ENCODE measurements at regions of chr19 and their contacts with region 1.

Region 1: DNA sequence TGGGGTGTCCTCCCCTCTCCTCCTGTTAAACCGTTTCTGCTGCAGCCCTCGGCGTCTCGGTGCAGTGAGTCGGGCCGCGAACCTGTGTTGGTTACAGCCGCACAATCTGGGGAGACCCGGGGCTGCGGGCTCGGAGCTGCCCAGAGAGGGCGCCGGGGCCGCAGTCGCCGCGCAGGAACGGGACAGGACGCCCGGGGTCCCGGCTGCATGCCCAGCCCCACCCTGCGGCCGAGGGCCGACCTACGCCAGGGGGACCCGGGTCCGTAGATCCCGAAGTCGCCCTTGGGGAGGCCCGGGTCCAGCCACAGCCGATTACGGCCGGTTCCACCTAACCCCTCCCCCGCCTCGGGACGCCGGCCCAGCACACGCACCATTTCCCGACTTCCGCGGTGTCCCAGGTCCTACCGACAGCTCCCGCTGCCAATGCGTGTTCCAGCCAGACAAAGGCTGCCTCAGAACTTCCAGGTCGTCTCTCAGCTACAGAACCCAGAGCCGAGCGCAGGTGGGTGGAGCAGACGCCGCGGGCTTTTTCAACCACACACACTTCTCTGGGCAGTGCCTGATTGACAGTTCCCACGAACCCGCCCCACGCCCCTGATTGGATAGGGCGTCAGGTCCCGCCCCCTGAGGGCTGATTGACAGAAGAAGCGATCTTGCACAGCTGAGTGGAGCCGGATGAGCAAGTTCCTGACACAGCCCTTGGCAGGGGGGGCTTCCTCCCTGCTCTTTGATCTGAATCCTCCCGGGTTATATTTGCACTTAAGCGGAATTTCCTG is at the start of gene ZNF443:
- DNase-seq: peak; percentile 90 to 99 (median 98)
- ATAC-seq: peak; percentile 93 to 98
- H3K4me3 Mint-ChIP-seq: peak within 1 kb of the TSS; percentile 98 to 100 (median 100)
- H3K27ac Mint-ChIP-seq: peak within 1 kb of the TSS; percentile 91 to 99 (median 96)
- H3K4me1 Mint-ChIP-seq: peaks cover 10 to 29% (median 13%) of the 10 kb centered on the region in 4 donors
- H3K27me3 Mint-ChIP-seq: no peaks in the 10 kb centered on the region
- polyA plus RNA-seq, gene ZNF443: 1.1 to 3.6 (median 2.0) TPM

Region 2: GRCh38 chr19:12365236-12366162 is 75.2 kb before region 1 on chr19 and contains the start of gene ZNF442:
- POLR2A ChIA-PET with region 1: interaction called, 13 read pairs
- DNase-seq: peak; percentile 70 to 95 (median 84)
- ATAC-seq: peak; percentile 97 to 99
- H3K4me3 Mint-ChIP-seq: peak within 1 kb of the TSS; percentile 93 to 99 (median 97)
- H3K27ac Mint-ChIP-seq: peak within 1 kb of the TSS; percentile 77 to 97 (median 94)
- H3K4me1 Mint-ChIP-seq: peaks cover 5 to 37% (median 23%) of the 10 kb centered on the region in 4 donors
- H3K27me3 Mint-ChIP-seq: no peaks in the 10 kb centered on the region
- polyA plus RNA-seq, gene ZNF442: 0.88 to 2.6 (median 1.7) TPM

Region 3: GRCh38 chr19:12411893-12412292 is 28.8 kb before region 1 on chr19:
- POLR2A ChIA-PET with region 1: no interaction called
- DNase-seq: no peak
- ATAC-seq: no peak
- H3K4me3 Mint-ChIP-seq: no peak overlapping the region
- H3K27ac Mint-ChIP-seq: no peak overlapping the region
- H3K4me1 Mint-ChIP-seq: no peaks in the 10 kb centered on the region
- H3K27me3 Mint-ChIP-seq: no peaks in the 10 kb centered on the region

Region 4: GRCh38 chr19:12425236-12425887 is 15.4 kb before region 1 on chr19:
- POLR2A ChIA-PET with region 1: no interaction called
- DNase-seq: no peak
- ATAC-seq: no peak
- H3K4me3 Mint-ChIP-seq: no peak overlapping the region
- H3K27ac Mint-ChIP-seq: no peak overlapping the region
- H3K4me1 Mint-ChIP-seq: no peaks in the 10 kb centered on the region
- H3K27me3 Mint-ChIP-seq: no peaks in the 10 kb centered on the region